H1 (cell line): ENCODE measurements at regions of chr2 and their contacts with region 1.

Region 1: DNA sequence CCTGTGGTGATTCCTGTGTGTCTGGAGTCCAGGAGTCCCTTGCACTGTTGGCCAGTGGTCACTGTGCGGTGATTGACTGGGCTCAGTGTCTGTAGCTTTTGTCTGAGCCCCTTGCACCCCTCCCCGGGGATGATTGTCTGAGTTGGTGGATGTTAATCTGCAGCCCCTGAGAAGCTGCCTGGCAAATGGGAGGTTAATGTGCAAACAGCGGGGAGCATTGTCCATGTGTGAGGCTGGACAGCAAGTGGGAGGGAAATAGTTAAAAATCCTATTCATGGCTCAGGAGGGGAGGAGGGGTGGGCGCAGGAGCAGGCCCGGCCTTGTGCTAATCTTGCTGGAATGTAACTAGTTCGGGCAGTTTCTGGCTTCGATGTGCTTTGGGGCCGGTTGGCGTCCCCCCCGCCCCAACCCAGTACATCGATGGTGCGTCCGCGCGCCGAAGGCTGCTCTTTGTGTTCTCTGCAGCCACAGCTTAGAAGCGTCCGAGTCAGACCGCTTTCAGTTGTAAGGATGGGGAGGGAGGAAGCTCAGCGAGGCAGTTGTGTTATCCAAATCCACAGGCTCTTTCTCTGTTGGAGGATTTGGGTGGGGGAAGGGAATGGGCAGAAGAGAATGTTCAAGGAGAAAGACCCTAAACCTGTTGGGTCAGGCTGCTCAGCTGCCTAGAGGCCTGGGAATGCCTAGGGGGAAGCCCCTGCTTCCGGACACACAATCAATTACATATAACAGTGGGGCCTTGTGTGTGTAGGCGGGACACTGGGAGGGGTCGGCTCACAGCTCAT is 71.8 kb downstream of the TGOLN2 start:
- DNase-seq: peak in 1 of 2 experiments; percentile 81
- H3K4me3 ChIP-seq: peak overlapping the region; percentile 1 to 48 (median 30); a peak in 7 of 8 replicates
- H3K27ac ChIP-seq: peak overlapping the region; percentile 97
- H3K4me1 ChIP-seq: peaks cover 43 to 65% (median 57%) of the 10 kb centered on the region in 4 experiments
- H3K27me3 ChIP-seq: no peaks in the 10 kb centered on the region
- CTCF ChIP-seq: no peak
- EP300 ChIP-seq: peak in 1 of 2 experiments; percentile 72; a peak in 1 of 3 replicates
- POLR2A ChIP-seq: peak; percentile 37 to 69
- RAD21 ChIP-seq: peak in 1 of 2 experiments; percentile 27; a peak in 2 of 4 replicates

Region 2: DNA sequence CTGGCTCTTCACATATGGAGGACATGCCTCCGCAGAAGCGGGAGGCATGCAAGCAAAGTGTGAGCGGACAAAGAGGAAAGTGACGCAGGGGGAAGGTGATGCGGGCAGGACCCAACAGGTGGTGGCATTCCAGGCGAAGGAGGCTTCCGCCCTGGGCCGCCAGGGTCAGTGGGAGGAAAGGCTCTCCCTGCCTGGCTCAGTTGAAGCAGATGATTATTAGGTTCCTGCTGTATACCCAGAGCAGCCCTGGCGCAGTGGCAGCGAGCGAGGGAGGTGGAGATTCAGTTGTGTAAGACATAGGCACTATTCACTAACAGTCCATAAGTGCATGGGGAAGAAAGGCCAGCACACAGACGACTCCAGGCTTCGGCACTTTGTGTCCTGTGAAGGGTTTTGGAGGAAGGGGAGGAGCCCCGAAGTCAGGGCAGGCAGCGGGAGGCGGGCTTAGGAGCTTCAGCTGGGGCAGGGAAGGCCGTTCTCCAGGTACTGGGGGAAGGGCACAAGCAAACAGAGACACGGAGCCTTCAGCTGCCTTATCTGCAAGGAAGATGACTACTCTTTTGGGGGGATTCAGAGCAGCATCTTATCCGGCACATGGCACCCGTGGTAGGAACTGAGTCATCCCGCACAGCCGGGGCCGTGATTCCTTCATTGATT is 18.0 kb before region 1 on chr2:
- CTCF ChIA-PET with region 1: interaction called, 55 read pairs
- POLR2A ChIA-PET with region 1: interaction called, 60 read pairs
- DNase-seq: peak; percentile 44 to 88
- H3K4me3 ChIP-seq: peak overlapping the region in 3 of 4 experiments; percentile 21 to 46 (median 27); a peak in 5 of 8 replicates
- H3K27ac ChIP-seq: peak overlapping the region; percentile 86
- H3K4me1 ChIP-seq: peaks cover 30 to 55% (median 38%) of the 10 kb centered on the region in 4 experiments
- H3K27me3 ChIP-seq: no peaks in the 10 kb centered on the region
- CTCF ChIP-seq: no peak
- EP300 ChIP-seq: no peak
- POLR2A ChIP-seq: peak in 1 of 2 experiments; percentile 78
- RAD21 ChIP-seq: peak; percentile 8 to 12; a peak in 1 of 4 replicates

Region 3: GRCh38 chr2:85266146-85267041 is 10.4 kb after region 1 on chr2:
- CTCF ChIA-PET with region 1: interaction called, 283 read pairs
- POLR2A ChIA-PET with region 1: interaction called, 18 read pairs
- DNase-seq: peak in 1 of 2 experiments; percentile 91
- H3K4me3 ChIP-seq: no peak overlapping the region
- H3K27ac ChIP-seq: no peak overlapping the region
- H3K4me1 ChIP-seq: peaks cover 13 to 23% (median 21%) of the 10 kb centered on the region in 4 experiments; a peak in 6 of 7 replicates
- H3K27me3 ChIP-seq: no peaks in the 10 kb centered on the region
- CTCF ChIP-seq: peak; percentile 83 to 85 (median 85)
- EP300 ChIP-seq: no peak
- POLR2A ChIP-seq: no peak
- RAD21 ChIP-seq: peak; percentile 62 to 76

Region 4: GRCh38 chr2:85288244-85288725 is 32.3 kb after region 1 on chr2:
- CTCF ChIA-PET with region 1: interaction called, 18 read pairs
- POLR2A ChIA-PET with region 1: interaction called, 3 read pairs
- DNase-seq: no peak
- H3K4me3 ChIP-seq: no peak overlapping the region
- H3K27ac ChIP-seq: no peak overlapping the region
- H3K4me1 ChIP-seq: peaks cover 0 to 14% (median under 1%) of the 10 kb centered on the region in 4 experiments; a peak in 2 of 7 replicates
- H3K27me3 ChIP-seq: no peaks in the 10 kb centered on the region
- CTCF ChIP-seq: no peak
- EP300 ChIP-seq: no peak
- POLR2A ChIP-seq: no peak
- RAD21 ChIP-seq: no peak

Region 5: GRCh38 chr2:85354286-85355072 is 98.5 kb after region 1 on chr2 and contains the starts of genes ELMOD3 and RETSAT:
- CTCF ChIA-PET with region 1: no interaction called
- POLR2A ChIA-PET with region 1: no interaction called
- DNase-seq: peak; percentile 92 to 96
- H3K4me3 ChIP-seq: peak within 1 kb of the TSS; percentile 75 to 96 (median 90)
- H3K27ac ChIP-seq: no peak within 1 kb of the TSS
- H3K4me1 ChIP-seq: peaks cover 0 to 3% (median 1%) of the 10 kb centered on the region in 4 experiments; a peak in 2 of 7 replicates
- H3K27me3 ChIP-seq: no peaks in the 10 kb centered on the region
- CTCF ChIP-seq: no peak
- EP300 ChIP-seq: no peak
- POLR2A ChIP-seq: peak in 1 of 2 experiments; percentile 93; a peak in 2 of 3 replicates
- RAD21 ChIP-seq: no peak
- total RNA-seq, gene ELMOD3: 6.9 and 10.2 TPM in 2 replicates
- total RNA-seq, gene RETSAT: 13.6 and 15.8 TPM in 2 replicates